GM13976 (cell line): ENCODE measurements at regions of chr5 and their contacts with region 1.

Region 1: DNA sequence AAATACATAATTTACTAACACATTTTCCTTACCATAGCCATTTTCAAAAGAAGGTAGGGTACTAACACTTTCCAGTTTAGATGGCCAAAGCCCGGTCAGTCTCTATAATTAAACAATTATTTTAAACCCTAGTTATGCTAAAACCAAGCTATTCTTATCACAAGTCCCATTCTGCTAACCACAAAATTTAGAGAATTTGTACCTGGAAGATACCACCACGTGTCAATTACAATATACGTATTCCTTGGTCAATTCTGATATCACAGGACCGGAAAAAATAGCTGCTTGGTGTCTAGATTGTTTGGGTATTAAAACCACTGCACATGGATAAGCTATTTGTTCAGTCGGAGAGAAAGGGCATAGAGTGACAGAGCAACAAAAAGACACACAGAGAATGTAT is 18.9 kb upstream of the SKP1 start:
- DNase-seq: no peak
- CTCF ChIP-seq: no peak

Region 2: GRCh38 chr5:133801955-133802751 is 393.5 kb before region 1 on chr5:
- in situ Hi-C with region 1: no loop called
- DNase-seq: no peak
- CTCF ChIP-seq: no peak

Region 3: GRCh38 chr5:134586866-134587524 is 391.3 kb after region 1 on chr5:
- in situ Hi-C with region 1: loop called (anchors 10 kb)
- DNase-seq: peak; percentile 86
- CTCF ChIP-seq: peak; percentile 78

Region 4: DNA sequence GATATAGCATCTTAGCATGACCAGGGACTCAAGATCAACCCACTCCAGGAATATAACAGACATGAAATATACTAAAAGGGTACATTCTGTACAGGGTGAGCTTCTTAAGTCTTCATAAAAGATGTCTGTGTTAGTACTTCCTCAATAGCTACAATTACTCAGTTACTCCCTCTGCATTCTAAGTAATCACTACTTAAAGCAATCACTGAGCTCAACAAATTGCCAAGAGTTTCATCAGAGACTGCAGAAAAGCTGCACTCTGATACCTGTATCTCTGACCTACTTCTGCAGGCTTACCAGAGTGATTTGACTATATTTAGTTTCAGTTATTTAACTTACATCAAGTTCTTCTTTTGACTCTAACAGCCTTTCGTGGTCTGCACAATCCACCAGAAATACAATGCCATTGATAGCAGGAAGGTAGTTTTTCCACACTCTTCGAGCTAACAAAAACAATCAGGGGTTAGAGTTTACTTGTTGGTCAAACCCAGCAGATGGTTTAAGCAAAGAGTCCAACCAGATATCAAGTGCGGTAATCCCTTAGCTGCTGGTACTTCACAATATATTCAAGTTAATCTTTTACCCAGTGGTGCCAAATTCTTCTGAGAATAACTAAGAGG is 413.7 kb after region 1 on chr5:
- in situ Hi-C with region 1: no loop called
- DNase-seq: peak; percentile 41
- CTCF ChIP-seq: no peak